Heart right ventricle (tissue), 16 donors: ENCODE measurements at regions of chr4 and their contacts with region 1.

Region 1: DNA sequence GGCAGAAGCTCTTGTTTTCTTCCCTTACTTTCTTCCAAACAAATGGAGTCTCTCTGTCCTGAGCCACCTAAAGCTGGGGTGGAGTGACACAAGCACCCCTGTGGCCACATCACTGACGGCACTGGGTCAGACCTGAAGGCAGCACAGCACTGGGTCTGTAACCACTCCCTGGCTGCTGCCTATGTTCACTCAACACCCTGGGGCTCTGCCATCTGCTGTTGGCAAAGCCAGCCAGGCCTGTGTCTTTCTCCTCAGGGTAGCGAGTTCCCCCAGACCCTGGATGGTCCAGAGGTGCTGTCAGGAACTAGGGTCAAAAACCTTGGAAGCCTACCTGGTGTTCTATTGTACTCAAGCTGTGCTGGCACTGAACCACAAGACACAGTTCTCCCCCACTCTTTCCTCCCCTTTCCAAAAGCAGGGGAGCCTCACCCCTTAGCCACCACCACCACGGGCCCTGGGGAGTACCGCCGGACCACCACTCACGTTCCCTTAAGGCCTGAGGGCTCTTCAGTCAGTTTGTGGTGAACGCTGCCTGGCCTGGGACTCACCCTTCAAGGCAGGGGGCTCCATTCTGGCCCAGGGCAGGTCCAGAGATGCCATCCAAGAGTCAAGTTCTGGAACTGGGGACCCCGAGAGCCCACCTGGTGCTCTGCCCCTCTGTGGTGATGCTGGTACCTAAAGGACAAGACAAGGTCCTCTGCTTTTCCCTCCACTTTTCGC is 31.5 kb downstream of the TMEM271 start:
- DNase-seq: no peak
- ATAC-seq: no peak
- H3K4me3 ChIP-seq: no peak overlapping the region
- H3K27ac ChIP-seq: no peak overlapping the region
- H3K4me1 ChIP-seq: no peaks in the 10 kb centered on the region
- H3K27me3 ChIP-seq: peaks cover 0 to 14% (median 4%) of the 10 kb centered on the region in 7 donors
- CTCF ChIP-seq: no peak

Region 2: GRCh38 chr4:577499-578452 is 33.2 kb after region 1 on chr4:
- intact Hi-C with region 1: loop called in 1 of 10 experiments (anchors 1 kb)
- DNase-seq: no peak
- ATAC-seq: peak in 1 of 8 donors; percentile 20
- H3K4me3 ChIP-seq: peak overlapping the region in 2 of 10 donors; percentile 7 to 14
- H3K27ac ChIP-seq: no peak overlapping the region
- H3K4me1 ChIP-seq: peaks cover 0 to 16% (median 3%) of the 10 kb centered on the region in 9 donors
- H3K27me3 ChIP-seq: peaks cover 17 to 91% (median 84%) of the 10 kb centered on the region in 7 donors
- CTCF ChIP-seq: no peak